ENCODE measurements at regions of chr6 and their contacts with region 1.

Region 1: GRCh38 chr6:4997862-4998261 is 6.0 kb downstream of the RPP40 start:
- DNase-seq: no peak
- ATAC-seq: no peak
- H3K4me3 ChIP-seq: no peak overlapping the region
- H3K27ac ChIP-seq: no peak overlapping the region
- H3K4me1 ChIP-seq: no peaks in the 10 kb centered on the region
- H3K27me3 ChIP-seq: no peaks in the 10 kb centered on the region
- CTCF ChIP-seq: no peak

Region 2: GRCh38 chr6:5011346-5011745 is 13.5 kb after region 1 on chr6:
- intact Hi-C with region 1: loop called in 1 of 10 experiments (anchors 1 kb)
- DNase-seq: no peak
- ATAC-seq: no peak
- H3K4me3 ChIP-seq: no peak overlapping the region
- H3K27ac ChIP-seq: no peak overlapping the region
- H3K4me1 ChIP-seq: no peaks in the 10 kb centered on the region
- H3K27me3 ChIP-seq: no peaks in the 10 kb centered on the region
- CTCF ChIP-seq: no peak